H1 (cell line): ENCODE measurements at regions of chr13 and their contacts with region 1.

Region 1: GRCh38 chr13:48126944-48127830 is 32.3 kb upstream of the MED4 start:
- DNase-seq: peak in 1 of 2 experiments; percentile 34
- H3K4me3 ChIP-seq: no peak overlapping the region; a peak in 1 of 8 replicates
- H3K27ac ChIP-seq: no peak overlapping the region; the same call in 1 of the 2 replicates
- H3K4me1 ChIP-seq: peaks cover 0 to 6% (median 3%) of the 10 kb centered on the region in 4 experiments; a peak in 6 of 7 replicates
- H3K27me3 ChIP-seq: no peaks in the 10 kb centered on the region
- CTCF ChIP-seq: peak in 2 of 3 experiments; percentile 51 to 58; a peak in 3 of 4 replicates
- EP300 ChIP-seq: 0 out of 3 replicates have a peak, but pooled peaks of 1 of the 2 experiments have one; percentile 12
- POLR2A ChIP-seq: no peak
- RAD21 ChIP-seq: peak; percentile 75 to 81

Region 2: DNA sequence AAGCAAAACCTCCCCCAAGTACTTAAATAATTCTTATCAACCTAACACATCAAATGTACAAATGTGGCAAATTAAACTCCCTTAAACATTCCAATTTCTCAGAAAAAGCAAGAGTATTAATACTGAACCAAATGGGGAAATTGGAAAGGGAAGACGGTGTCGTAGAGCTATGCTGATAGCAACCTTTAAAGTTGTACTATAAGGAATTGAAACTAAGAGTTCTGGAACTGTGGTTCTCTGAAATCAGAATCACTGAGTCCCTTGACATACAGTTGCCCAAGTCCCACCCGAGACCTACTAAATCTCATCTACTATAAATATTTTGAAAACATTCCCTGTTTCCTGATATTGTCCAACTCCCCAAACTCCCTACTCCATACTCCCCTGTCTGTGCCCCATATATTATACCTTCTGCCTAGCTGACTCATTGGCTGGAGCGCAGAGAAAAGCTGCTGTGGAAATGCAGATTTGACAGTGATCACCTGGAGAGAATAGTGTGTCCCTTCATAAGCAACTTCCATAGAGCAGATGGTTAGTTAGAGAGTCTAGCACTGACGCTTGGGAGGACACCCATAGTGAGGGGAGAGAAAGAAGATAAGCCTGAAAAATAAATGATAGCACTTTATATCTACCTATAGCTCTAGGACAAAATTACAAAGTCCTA is 54.4 kb after region 1 on chr13:
- CTCF ChIA-PET with region 1: interaction called, 11 read pairs
- POLR2A ChIA-PET with region 1: no interaction called
- DNase-seq: no peak
- H3K4me3 ChIP-seq: no peak overlapping the region
- H3K27ac ChIP-seq: no peak overlapping the region
- H3K4me1 ChIP-seq: peaks cover 0 to 5% (median 1%) of the 10 kb centered on the region in 4 experiments; a peak in 2 of 7 replicates
- H3K27me3 ChIP-seq: no peaks in the 10 kb centered on the region
- CTCF ChIP-seq: no peak
- EP300 ChIP-seq: no peak
- POLR2A ChIP-seq: no peak
- RAD21 ChIP-seq: no peak

Region 3: DNA sequence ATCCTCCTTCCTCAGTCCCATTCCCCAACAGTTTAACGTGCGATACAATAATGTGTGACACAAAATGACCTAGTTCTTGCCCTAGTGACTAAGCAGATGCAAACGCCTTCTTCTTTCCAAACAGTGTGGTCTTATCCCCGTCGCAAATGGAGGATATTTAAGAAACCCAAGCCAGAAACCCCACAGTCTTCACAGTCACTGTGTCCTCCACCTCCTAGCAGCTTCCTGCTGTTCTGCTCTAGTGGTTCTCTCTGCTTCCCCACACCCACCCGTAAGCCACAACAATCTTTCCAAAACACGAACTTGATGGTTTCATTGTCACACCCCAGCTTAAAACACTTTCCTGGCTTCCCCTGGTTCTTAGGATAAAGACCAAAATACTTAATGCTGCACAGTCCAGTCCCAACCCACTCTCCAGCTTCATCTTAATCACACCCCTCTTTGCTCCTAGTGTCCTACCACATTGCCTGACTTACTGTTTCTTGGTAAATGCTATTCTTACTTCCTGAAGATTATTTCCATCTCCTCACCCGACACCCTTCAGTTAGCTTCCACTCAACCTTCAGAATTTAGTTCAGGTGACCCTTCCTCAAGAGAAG is 138.1 kb after region 1 on chr13:
- CTCF ChIA-PET with region 1: interaction called, 11 read pairs
- POLR2A ChIA-PET with region 1: no interaction called
- DNase-seq: no peak
- H3K4me3 ChIP-seq: no peak overlapping the region
- H3K27ac ChIP-seq: no peak overlapping the region
- H3K4me1 ChIP-seq: peaks cover 0 to 2% (median 0%) of the 10 kb centered on the region in 4 experiments; a peak in 2 of 7 replicates
- H3K27me3 ChIP-seq: no peaks in the 10 kb centered on the region
- CTCF ChIP-seq: no peak
- EP300 ChIP-seq: no peak
- POLR2A ChIP-seq: no peak
- RAD21 ChIP-seq: no peak

Region 4: GRCh38 chr13:48356750-48357149 is 229.6 kb after region 1 on chr13:
- CTCF ChIA-PET with region 1: no interaction called
- POLR2A ChIA-PET with region 1: no interaction called
- DNase-seq: no peak
- H3K4me3 ChIP-seq: no peak overlapping the region
- H3K27ac ChIP-seq: no peak overlapping the region
- H3K4me1 ChIP-seq: no peaks in the 10 kb centered on the region
- H3K27me3 ChIP-seq: no peaks in the 10 kb centered on the region
- CTCF ChIP-seq: no peak
- EP300 ChIP-seq: no peak
- POLR2A ChIP-seq: no peak
- RAD21 ChIP-seq: no peak

Region 5: GRCh38 chr13:48942131-48942530 is 814.9 kb after region 1 on chr13:
- CTCF ChIA-PET with region 1: no interaction called
- POLR2A ChIA-PET with region 1: no interaction called
- DNase-seq: no peak
- H3K4me3 ChIP-seq: no peak overlapping the region
- H3K27ac ChIP-seq: no peak overlapping the region
- H3K4me1 ChIP-seq: 0 out of 7 replicates have a peak, but pooled peaks cover 0 to 2% (median 0%) of the 10 kb centered on the region in 4 experiments
- H3K27me3 ChIP-seq: no peaks in the 10 kb centered on the region
- CTCF ChIP-seq: no peak
- EP300 ChIP-seq: no peak
- POLR2A ChIP-seq: no peak
- RAD21 ChIP-seq: no peak